Activated CD8-positive, alpha-beta T cell treated with anti-CD3 and anti-CD28 coated beads, Interleukin-2, amount 10 ng/mL, durations not matched to agents 7 days and 5 days (primary cell): ENCODE measurements at regions of chr17 and their contacts with region 1.

Region 1: GRCh38 chr17:45148183-45149036 is at the start of gene HEXIM1:
- DNase-seq: peak; percentile 99
- ATAC-seq: peak; percentile 80
- H3K4me3 Mint-ChIP-seq: peak within 1 kb of the TSS; percentile 95
- H3K27ac Mint-ChIP-seq: peak within 1 kb of the TSS; percentile 100
- H3K4me1 Mint-ChIP-seq: peaks cover 39% of the 10 kb centered on the region
- H3K27me3 Mint-ChIP-seq: no peaks in the 10 kb centered on the region
- total RNA-seq, gene HEXIM1: 29.2 to 29.4 TPM

Region 2: DNA sequence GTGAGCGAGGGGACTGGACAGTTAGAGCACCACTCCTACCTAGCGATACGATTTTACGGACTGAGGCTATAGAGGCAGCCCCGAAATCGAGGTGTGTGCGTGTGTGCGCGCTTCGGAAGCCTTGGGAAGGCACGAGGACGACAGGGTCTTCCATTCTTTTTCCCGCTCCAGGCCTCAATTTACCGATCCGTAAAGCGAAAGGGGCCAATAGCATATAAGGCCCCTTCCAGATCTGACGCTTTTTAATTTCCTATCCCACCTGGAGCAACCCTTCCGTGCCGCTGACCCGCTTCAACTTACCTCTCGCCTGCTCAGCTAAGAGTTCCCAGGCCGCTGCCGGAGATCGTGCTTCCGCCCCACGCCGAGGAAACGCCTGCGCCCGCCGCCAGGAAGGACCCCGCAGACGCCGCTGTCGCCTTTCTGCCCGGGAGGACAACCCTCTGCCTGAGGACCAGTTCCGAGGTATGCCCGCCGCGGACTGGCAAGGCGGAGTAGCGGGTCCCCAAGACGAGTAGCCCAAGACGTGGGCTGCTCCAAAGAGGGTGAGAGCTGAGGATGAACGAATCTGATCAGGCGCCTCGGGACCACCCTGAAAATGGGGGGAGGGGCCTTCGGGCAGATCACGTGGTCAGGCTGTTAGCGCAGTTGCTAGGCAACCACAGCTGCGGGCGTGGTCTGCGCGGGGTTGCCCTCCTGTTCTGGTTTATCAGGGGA is 249.2 kb before region 1 on chr17 and contains the start of gene EFTUD2:
- CTCF ChIA-PET with region 1: no interaction called
- POLR2A ChIA-PET with region 1: interaction called, 11 read pairs
- DNase-seq: peak; percentile 93
- ATAC-seq: peak; percentile 93
- H3K4me3 Mint-ChIP-seq: peak within 1 kb of the TSS; percentile 92
- H3K27ac Mint-ChIP-seq: peak within 1 kb of the TSS; percentile 100
- H3K4me1 Mint-ChIP-seq: peaks cover 26% of the 10 kb centered on the region
- H3K27me3 Mint-ChIP-seq: peaks cover 4% of the 10 kb centered on the region
- total RNA-seq, gene EFTUD2: 148 to 156 TPM

Region 3: DNA sequence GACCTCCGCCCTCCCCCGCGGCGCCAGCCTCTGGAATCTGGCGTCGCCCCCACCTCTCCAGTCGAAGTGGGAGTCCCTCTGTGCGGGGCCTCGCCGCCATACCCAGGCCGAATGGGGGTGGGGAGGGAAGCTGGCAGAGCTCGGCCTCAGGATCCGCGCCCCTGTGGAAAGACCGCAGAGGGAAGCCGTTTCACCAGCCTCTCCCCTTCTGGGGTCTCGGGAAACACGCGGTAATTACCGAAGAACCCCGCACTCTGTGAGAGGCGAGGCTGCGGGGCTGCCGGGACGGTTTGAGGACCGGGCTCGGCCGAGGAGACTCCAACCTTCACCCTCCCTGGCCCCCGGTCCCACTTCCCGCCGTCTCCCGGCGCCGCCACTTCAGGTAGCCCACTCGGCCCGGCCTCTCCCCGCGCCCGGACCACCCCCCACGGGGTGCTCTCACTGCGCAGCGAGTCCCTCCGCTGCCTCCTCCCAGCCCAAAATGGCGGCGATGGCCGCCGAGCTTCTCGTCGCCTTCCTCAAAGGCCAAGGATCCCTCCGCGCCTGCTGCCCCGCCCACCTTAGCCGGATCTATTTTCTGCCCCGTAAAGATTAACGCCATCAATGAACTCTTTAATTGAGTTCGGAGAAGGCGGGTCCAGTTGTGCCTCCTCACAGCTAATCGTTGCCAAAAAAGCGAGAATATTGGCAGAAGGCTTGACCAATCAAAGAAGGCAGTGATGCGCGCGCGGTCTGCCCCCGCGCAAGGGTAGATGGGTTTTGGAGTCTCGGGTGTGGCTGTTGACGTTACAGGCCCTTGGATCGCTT is 12.8 kb after region 1 on chr17:
- CTCF ChIA-PET with region 1: interaction called, 225 read pairs
- POLR2A ChIA-PET with region 1: interaction called, 280 read pairs
- DNase-seq: peak; percentile 99
- ATAC-seq: peak; percentile 98
- H3K4me3 Mint-ChIP-seq: peak overlapping the region; percentile 99
- H3K27ac Mint-ChIP-seq: peak overlapping the region; percentile 98
- H3K4me1 Mint-ChIP-seq: peaks cover 43% of the 10 kb centered on the region
- H3K27me3 Mint-ChIP-seq: no peaks in the 10 kb centered on the region

Region 4: DNA sequence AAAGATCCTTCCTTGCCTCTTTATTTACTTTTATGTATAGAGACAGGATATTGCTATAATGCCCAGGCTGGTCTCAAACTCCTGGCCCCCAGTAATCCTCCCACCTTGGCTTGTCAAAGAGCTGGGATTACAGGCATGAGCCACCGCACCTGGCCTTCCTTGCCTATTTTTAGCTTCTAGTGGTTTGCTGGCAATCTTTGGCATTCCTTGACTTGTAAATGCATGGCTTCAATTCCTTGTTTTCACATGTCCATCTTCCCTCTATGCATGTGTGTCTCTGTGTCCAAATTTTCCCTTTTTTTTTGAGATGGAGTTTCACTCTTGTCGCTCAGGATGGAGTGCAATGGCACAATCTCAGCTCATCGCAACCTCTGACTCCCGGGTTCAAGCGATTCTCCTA is 35.7 kb after region 1 on chr17:
- CTCF ChIA-PET with region 1: interaction called, 14 read pairs
- POLR2A ChIA-PET with region 1: interaction called, 5 read pairs
- DNase-seq: no peak
- ATAC-seq: no peak
- H3K4me3 Mint-ChIP-seq: no peak overlapping the region
- H3K27ac Mint-ChIP-seq: no peak overlapping the region
- H3K4me1 Mint-ChIP-seq: no peaks in the 10 kb centered on the region
- H3K27me3 Mint-ChIP-seq: peaks cover 1% of the 10 kb centered on the region

Region 5: GRCh38 chr17:45228763-45229539 is 80.5 kb after region 1 on chr17:
- CTCF ChIA-PET with region 1: interaction called, 70 read pairs
- POLR2A ChIA-PET with region 1: interaction called, 97 read pairs
- DNase-seq: peak; percentile 83
- ATAC-seq: peak; percentile 41
- H3K4me3 Mint-ChIP-seq: peak overlapping the region; percentile 100
- H3K27ac Mint-ChIP-seq: peak overlapping the region; percentile 94
- H3K4me1 Mint-ChIP-seq: peaks cover 93% of the 10 kb centered on the region
- H3K27me3 Mint-ChIP-seq: no peaks in the 10 kb centered on the region

Region 6: DNA sequence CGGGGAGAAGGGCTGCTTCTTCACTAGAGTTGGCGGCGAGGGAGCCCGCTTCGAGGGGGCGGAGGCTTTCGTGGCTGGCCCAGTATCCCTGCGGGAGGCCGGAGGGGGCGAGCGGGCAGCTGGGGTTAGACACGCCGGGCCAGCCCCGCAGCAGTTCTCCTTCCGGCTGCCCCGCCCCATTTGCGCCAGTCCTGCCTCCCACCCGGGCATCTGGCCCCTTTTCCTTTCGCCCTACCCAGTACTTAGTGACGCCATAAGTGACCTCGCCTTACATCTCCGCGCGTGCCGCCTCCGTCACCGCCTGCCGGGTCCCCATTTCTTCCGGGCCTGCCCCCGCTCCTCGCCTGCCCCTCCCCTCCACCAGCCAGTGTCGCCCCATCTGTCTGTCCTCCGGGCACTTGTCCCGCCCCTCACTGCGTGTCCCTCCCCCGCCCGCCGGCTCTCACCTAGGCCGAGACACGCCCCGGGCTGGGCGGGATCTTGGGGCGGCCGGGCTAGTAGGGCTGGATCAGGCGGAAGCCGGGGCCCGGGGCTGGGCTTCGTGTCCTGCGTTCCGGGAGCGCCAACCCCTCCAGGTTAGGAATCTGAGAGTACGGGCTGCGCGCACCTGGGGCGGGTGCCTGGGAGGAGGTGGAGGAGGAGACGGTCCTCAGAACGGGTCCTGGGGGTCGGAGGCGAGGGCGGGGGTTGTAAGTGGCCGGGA is 99.2 kb after region 1 on chr17:
- CTCF ChIA-PET with region 1: interaction called, 10 read pairs
- POLR2A ChIA-PET with region 1: interaction called, 19 read pairs
- DNase-seq: peak; percentile 99
- ATAC-seq: peak; percentile 92
- H3K4me3 Mint-ChIP-seq: peak overlapping the region; percentile 91
- H3K27ac Mint-ChIP-seq: peak overlapping the region; percentile 97
- H3K4me1 Mint-ChIP-seq: peaks cover 75% of the 10 kb centered on the region
- H3K27me3 Mint-ChIP-seq: no peaks in the 10 kb centered on the region

Region 7: GRCh38 chr17:45317112-45317928 is 168.9 kb after region 1 on chr17:
- CTCF ChIA-PET with region 1: interaction called, 9 read pairs
- POLR2A ChIA-PET with region 1: interaction called, 19 read pairs
- DNase-seq: peak; percentile 100
- ATAC-seq: peak; percentile 90
- H3K4me3 Mint-ChIP-seq: peak overlapping the region; percentile 83
- H3K27ac Mint-ChIP-seq: peak overlapping the region; percentile 93
- H3K4me1 Mint-ChIP-seq: peaks cover 73% of the 10 kb centered on the region
- H3K27me3 Mint-ChIP-seq: no peaks in the 10 kb centered on the region